Mammary epithelial cell (primary cell): ENCODE measurements at regions of chr1 and their contacts with region 1.

Region 1: GRCh38 chr1:203681739-203682138 is 55.1 kb downstream of the ATP2B4 start:
- DNase-seq: no peak
- H3K4me3 ChIP-seq: no peak overlapping the region
- H3K27ac ChIP-seq: no peak overlapping the region
- H3K4me1 ChIP-seq: no peaks in the 10 kb centered on the region
- H3K27me3 ChIP-seq: no peaks in the 10 kb centered on the region
- CTCF ChIP-seq: no peak

Region 2: GRCh38 chr1:203437696-203438315 is 243.9 kb before region 1 on chr1:
- CTCF ChIA-PET with region 1: no interaction called
- dilution Hi-C with region 1: no loop called
- in situ Hi-C with region 1: no loop called
- intact Hi-C with region 1: no loop called
- DNase-seq: no peak
- H3K4me3 ChIP-seq: no peak overlapping the region
- H3K27ac ChIP-seq: no peak overlapping the region
- H3K4me1 ChIP-seq: no peaks in the 10 kb centered on the region
- H3K27me3 ChIP-seq: peaks cover 2% of the 10 kb centered on the region
- CTCF ChIP-seq: no peak

Region 3: DNA sequence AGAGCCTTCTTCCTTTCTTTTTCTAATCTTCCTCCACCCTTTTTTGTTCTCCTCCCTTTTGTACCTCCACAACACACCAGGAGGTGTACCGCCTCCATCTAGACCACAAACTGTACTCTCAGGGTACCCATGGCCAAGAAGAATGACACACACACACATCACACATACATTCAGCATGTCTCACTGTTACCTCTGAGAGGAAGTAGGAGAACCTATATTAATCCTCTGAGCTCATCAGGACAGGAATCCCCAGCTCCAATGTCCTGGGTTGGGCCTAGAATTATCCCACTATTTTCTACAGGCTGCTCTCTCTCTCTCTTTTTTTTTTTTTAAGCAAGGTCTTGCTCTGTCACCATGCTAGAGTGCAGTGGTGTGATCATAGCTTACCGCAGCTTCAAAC is 18.4 kb before region 1 on chr1:
- CTCF ChIA-PET with region 1: interaction called, 10 read pairs
- dilution Hi-C with region 1: no loop called
- in situ Hi-C with region 1: no loop called
- intact Hi-C with region 1: no loop called
- DNase-seq: peak; percentile 100
- H3K4me3 ChIP-seq: no peak overlapping the region
- H3K27ac ChIP-seq: peak overlapping the region; percentile 97
- H3K4me1 ChIP-seq: peaks cover 34% of the 10 kb centered on the region
- H3K27me3 ChIP-seq: no peaks in the 10 kb centered on the region
- CTCF ChIP-seq: peak; percentile 10 to 42